MCF 10A (cell line): ENCODE measurements at regions of chr11 and their contacts with region 1.

Region 1: GRCh38 chr11:33687733-33688479 is 12.7 kb downstream of the C11orf91 start:
- DNase-seq: peak; percentile 77
- H3K4me3 Mint-ChIP-seq: no peak overlapping the region
- H3K27ac Mint-ChIP-seq: no peak overlapping the region
- H3K4me1 Mint-ChIP-seq: peaks cover 42% of the 10 kb centered on the region
- H3K27me3 Mint-ChIP-seq: no peaks in the 10 kb centered on the region
- CTCF ChIP-seq: peak; percentile 70

Region 2: GRCh38 chr11:33257897-33258630 is 429.8 kb before region 1 on chr11:
- CTCF ChIA-PET with region 1: interaction called, 4 read pairs
- POLR2A ChIA-PET with region 1: no interaction called
- intact Hi-C with region 1: loop called (anchors 5 kb)
- DNase-seq: peak; percentile 92
- H3K4me3 Mint-ChIP-seq: peak overlapping the region; percentile 90
- H3K27ac Mint-ChIP-seq: peak overlapping the region; percentile 95
- H3K4me1 Mint-ChIP-seq: peaks cover 28% of the 10 kb centered on the region
- H3K27me3 Mint-ChIP-seq: no peaks in the 10 kb centered on the region
- CTCF ChIP-seq: no peak

Region 3: GRCh38 chr11:33375688-33376311 is 312.1 kb before region 1 on chr11:
- CTCF ChIA-PET with region 1: interaction called, 10 read pairs
- POLR2A ChIA-PET with region 1: no interaction called
- intact Hi-C with region 1: no loop called
- DNase-seq: no peak
- H3K4me3 Mint-ChIP-seq: peak within 1 kb of the TSS; percentile 56
- H3K27ac Mint-ChIP-seq: no peak within 1 kb of the TSS
- H3K4me1 Mint-ChIP-seq: peaks cover 5% of the 10 kb centered on the region
- H3K27me3 Mint-ChIP-seq: peaks cover 21% of the 10 kb centered on the region
- CTCF ChIP-seq: no peak

Region 4: GRCh38 chr11:33594188-33594587 is 93.7 kb before region 1 on chr11:
- CTCF ChIA-PET with region 1: no interaction called
- POLR2A ChIA-PET with region 1: no interaction called
- intact Hi-C with region 1: no loop called
- DNase-seq: no peak
- H3K4me3 Mint-ChIP-seq: no peak overlapping the region
- H3K27ac Mint-ChIP-seq: no peak overlapping the region
- H3K4me1 Mint-ChIP-seq: no peaks in the 10 kb centered on the region
- H3K27me3 Mint-ChIP-seq: peaks cover 22% of the 10 kb centered on the region
- CTCF ChIP-seq: no peak

Region 5: DNA sequence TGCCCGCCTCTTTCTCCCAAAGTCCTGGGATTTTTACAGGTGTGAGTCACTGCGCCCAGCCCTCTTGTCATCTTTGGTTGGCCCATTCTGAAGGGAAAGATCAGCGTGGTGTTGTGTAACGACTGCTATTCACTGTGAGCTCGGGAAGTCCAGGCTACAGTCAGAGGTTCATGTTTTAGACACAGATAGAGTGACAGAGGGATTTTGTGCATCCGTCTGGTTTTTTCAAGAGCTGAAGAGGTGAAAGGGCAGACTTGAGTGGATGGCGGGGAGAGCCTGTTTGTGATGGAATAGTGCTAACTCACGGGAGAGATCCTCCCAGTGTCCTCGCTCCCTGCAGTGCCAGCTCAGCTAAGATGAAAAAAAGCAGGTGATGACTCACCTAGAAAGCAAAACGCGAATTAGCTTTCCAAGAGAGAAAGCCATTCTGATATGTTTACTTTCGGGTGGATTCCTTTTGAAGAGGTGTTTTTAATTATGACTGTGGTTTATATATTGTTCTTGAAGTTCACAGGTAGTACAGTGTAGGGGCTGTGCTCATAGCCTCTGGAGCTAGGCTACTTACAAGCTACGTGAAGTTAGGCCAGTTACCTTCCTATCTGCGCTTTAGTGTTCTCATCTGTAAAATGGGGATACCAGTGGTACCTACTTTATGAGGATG is 54.5 kb before region 1 on chr11:
- CTCF ChIA-PET with region 1: interaction called, 9 read pairs
- POLR2A ChIA-PET with region 1: interaction called, 41 read pairs
- intact Hi-C with region 1: loop called (anchors 5 kb)
- DNase-seq: peak; percentile 95
- H3K4me3 Mint-ChIP-seq: peak overlapping the region; percentile 44
- H3K27ac Mint-ChIP-seq: peak overlapping the region; percentile 90
- H3K4me1 Mint-ChIP-seq: peaks cover 32% of the 10 kb centered on the region
- H3K27me3 Mint-ChIP-seq: no peaks in the 10 kb centered on the region
- CTCF ChIP-seq: no peak

Region 6: DNA sequence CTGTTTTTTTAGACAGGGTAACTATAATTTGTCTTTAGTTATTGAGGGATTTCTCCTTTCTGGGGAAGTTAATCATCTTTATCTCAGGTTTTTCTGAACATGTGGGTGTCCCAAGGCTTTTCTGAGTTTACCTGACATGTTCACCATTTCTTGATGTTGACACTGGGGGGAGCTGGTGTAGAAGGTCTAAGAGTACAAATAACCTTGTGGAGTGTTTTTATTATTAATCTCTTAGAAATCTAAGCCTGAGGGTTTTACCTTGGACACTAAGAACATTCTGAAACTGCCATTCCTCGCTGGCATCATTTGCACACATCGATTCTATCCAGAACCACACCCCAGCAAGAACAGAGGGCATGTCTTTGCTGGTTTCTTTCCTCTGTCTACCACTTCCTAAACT is 28.3 kb after region 1 on chr11:
- CTCF ChIA-PET with region 1: interaction called, 13 read pairs
- POLR2A ChIA-PET with region 1: interaction called, 29 read pairs
- intact Hi-C with region 1: no loop called
- DNase-seq: peak; percentile 86
- H3K4me3 Mint-ChIP-seq: peak overlapping the region; percentile 53
- H3K27ac Mint-ChIP-seq: peak overlapping the region; percentile 78
- H3K4me1 Mint-ChIP-seq: peaks cover 31% of the 10 kb centered on the region
- H3K27me3 Mint-ChIP-seq: no peaks in the 10 kb centered on the region
- CTCF ChIP-seq: peak; percentile 45

Region 7: GRCh38 chr11:33742249-33742851 is 54.4 kb after region 1 on chr11:
- CTCF ChIA-PET with region 1: interaction called, 43 read pairs
- POLR2A ChIA-PET with region 1: interaction called, 73 read pairs
- intact Hi-C with region 1: no loop called
- DNase-seq: peak; percentile 37
- H3K4me3 Mint-ChIP-seq: no peak overlapping the region
- H3K27ac Mint-ChIP-seq: no peak overlapping the region
- H3K4me1 Mint-ChIP-seq: peaks cover 14% of the 10 kb centered on the region
- H3K27me3 Mint-ChIP-seq: no peaks in the 10 kb centered on the region
- CTCF ChIP-seq: peak; percentile 38